HEK293 (cell line): ENCODE measurements at regions of chr10 and their contacts with region 1.

Region 1: DNA sequence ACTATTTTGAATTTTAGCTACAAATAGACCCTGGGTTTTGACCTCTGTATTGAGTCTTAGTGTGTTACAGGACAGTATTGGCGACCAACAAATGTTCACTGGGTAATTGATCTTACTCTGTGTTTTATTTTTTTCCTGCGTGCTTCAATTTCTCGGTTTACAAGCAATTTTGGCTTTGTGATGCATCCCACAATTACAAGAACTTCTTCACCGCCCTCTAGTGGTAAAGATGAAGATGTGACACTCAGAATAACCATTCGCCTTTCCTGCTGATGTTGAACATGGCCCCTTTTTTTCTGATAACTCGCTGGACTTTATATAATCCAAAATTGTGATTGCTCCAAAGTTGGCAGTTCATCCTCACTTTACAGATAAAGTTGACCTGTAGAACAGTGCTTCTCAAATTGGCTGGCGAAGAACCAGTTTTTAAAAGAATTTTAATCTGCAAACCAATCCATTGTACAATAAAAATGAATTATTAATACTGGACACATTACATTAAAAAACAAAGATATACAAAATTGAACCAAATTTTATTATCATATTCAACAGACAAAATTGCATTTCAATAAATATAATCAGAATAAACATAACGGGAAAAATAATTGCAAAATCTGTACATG is 20.2 kb upstream of the SMC3 start:
- H3K4me3 ChIP-seq: no peak overlapping the region
- H3K27ac ChIP-seq: no peak overlapping the region
- H3K4me1 ChIP-seq: no peaks in the 10 kb centered on the region
- CTCF ChIP-seq: peak; percentile 49; the same call in 1 of the 2 replicates

Region 2: DNA sequence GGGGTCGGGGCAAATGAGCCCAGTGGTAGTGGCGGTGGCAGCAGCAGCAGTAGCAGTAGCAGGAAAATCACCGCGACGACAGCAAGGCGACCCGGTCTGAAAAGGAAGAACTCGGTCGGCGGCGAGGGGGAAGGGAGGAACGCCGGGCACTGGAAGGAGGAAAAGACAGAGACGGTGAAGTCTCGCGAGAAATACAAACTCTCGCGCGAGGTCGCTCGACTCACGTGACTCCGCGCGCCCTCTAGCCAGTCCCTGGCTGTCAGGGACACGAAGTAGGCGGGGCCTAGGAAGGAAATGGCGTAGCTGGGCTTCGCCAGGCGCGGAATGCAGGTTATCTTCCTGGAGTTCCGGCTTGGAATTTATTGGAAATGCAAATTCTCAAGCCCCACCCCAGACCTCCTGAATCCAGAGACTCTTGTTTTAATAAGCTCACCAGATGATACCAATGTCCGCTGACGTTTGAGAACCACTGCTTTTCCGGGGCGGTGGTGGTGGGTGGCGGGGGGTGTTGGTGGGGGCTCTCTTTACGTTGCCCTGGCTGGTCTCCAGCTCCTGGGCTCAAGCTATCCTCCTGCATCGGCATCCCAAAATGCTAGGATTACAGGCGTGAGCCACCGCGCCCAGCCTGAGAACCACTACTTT is 242.3 kb before region 1 on chr10 and contains the start of gene SMNDC1:
- CTCF ChIA-PET with region 1: interaction called, 24 read pairs
- POLR2A ChIA-PET with region 1: interaction called, 10 read pairs
- H3K4me3 ChIP-seq: peak within 1 kb of the TSS; percentile 54
- H3K27ac ChIP-seq: peak within 1 kb of the TSS; percentile 90
- H3K4me1 ChIP-seq: peaks cover 9% of the 10 kb centered on the region
- CTCF ChIP-seq: no peak

Region 3: GRCh38 chr10:110311357-110311949 is 235.8 kb before region 1 on chr10:
- CTCF ChIA-PET with region 1: interaction called, 24 read pairs
- POLR2A ChIA-PET with region 1: no interaction called
- H3K4me3 ChIP-seq: no peak overlapping the region
- H3K27ac ChIP-seq: no peak overlapping the region
- H3K4me1 ChIP-seq: no peaks in the 10 kb centered on the region
- CTCF ChIP-seq: peak; percentile 57; the same call in 1 of the 2 replicates

Region 4: GRCh38 chr10:110354322-110354766 is 192.9 kb before region 1 on chr10:
- CTCF ChIA-PET with region 1: interaction called, 34 read pairs
- POLR2A ChIA-PET with region 1: no interaction called
- H3K4me3 ChIP-seq: no peak overlapping the region
- H3K27ac ChIP-seq: no peak overlapping the region
- H3K4me1 ChIP-seq: no peaks in the 10 kb centered on the region
- CTCF ChIP-seq: peak; percentile 63

Region 5: DNA sequence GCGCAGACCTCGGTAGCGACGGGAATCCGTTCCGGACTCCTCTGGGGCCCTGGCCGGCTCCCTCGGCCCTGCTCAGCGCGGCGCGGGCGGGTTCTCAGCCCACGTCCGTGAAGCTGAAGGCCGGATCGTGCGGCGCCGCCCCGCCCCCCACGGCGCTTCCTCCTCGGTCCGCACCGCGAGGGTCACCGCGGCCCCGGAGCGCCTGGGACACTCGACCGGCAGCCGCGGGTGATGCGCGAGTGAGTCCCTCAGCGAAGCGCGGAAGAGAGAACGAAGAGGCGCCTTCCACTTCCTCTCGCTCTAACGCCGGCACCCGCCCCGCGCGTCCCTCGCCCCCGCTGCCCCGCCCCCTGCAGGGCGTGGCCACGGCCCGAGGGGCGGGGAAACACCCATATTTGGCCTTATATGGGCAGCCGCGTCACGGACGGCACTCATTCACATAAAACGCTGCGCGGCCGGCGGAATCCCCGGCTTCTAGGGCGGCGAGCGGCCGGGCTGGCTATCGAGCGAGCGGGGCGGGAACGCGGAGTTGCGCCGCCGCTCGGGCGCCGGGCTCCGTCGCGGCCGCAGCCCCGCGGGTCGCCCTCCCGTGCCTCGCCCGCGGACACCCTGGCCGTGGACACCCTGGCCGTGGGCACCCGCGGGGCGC is 49.7 kb before region 1 on chr10 and contains the start of gene DUSP5:
- CTCF ChIA-PET with region 1: interaction called, 10 read pairs
- POLR2A ChIA-PET with region 1: no interaction called
- H3K4me3 ChIP-seq: peak within 1 kb of the TSS; percentile 63
- H3K27ac ChIP-seq: peak within 1 kb of the TSS; percentile 78
- H3K4me1 ChIP-seq: peaks cover 32% of the 10 kb centered on the region
- CTCF ChIP-seq: no peak

Region 6: GRCh38 chr10:110563132-110563531 is 15.9 kb after region 1 on chr10:
- CTCF ChIA-PET with region 1: interaction called, 16 read pairs
- POLR2A ChIA-PET with region 1: no interaction called
- H3K4me3 ChIP-seq: no peak overlapping the region
- H3K27ac ChIP-seq: no peak overlapping the region
- H3K4me1 ChIP-seq: 0 out of 2 replicates have a peak, but pooled peaks cover 3% of the 10 kb centered on the region
- CTCF ChIP-seq: no peak